ENCODE measurements at regions of chr17 and their contacts with region 1.

Region 1: GRCh38 chr17:38485146-38485468 is 56.8 kb downstream of the ARHGAP23 start:
- DNase-seq: no peak
- ATAC-seq: no peak
- H3K4me3 ChIP-seq: no peak overlapping the region
- H3K27ac ChIP-seq: no peak overlapping the region
- H3K4me1 ChIP-seq: peaks cover 0 to 4% of the 10 kb centered on the region in 2 experiments; a peak in 1 of 4 replicates
- H3K27me3 ChIP-seq: no peaks in the 10 kb centered on the region
- CTCF ChIP-seq: no peak
- POLR2A ChIP-seq: no peak
- RAD21 ChIP-seq: no peak

Region 2: GRCh38 chr17:38428112-38428642 is 56.9 kb before region 1 on chr17 and contains the start of gene ARHGAP23:
- CTCF ChIA-PET with region 1: interaction called, 8 read pairs
- POLR2A ChIA-PET with region 1: no interaction called
- RAD21 ChIA-PET with region 1: interaction called in 1 of 2 experiments, 4 read pairs
- intact Hi-C with region 1: loop called (anchors 1 kb)
- DNase-seq: no peak
- ATAC-seq: peak; percentile 66
- H3K4me3 ChIP-seq: peak within 1 kb of the TSS; percentile 64 to 81
- H3K27ac ChIP-seq: peak within 1 kb of the TSS; percentile 62
- H3K4me1 ChIP-seq: peaks cover 22 to 44% of the 10 kb centered on the region in 2 experiments
- H3K27me3 ChIP-seq: no peaks in the 10 kb centered on the region
- CTCF ChIP-seq: no peak
- POLR2A ChIP-seq: no peak
- RAD21 ChIP-seq: no peak
- total RNA-seq, gene ARHGAP23: 41.0 TPM

Region 3: DNA sequence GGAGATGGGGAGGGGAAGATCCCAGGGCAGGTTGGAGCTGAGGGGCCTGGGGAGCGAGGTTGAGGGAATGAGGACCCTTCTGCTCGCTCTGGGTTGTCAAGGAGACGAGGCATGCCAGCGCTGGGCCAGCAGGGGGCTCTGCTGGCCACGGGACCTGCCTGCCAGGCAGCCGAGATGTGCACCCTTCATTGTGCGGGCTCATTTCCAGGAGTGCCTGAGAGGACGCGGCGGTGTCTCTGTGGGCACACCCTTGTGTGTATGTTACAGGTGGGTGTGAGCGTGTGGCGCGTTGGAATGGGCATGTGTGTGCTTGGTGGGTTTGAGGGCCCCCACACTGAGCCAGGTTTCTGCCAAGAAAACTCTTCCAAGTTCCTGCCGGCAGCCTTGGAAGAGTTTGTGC is 41.0 kb before region 1 on chr17:
- CTCF ChIA-PET with region 1: no interaction called
- POLR2A ChIA-PET with region 1: no interaction called
- RAD21 ChIA-PET with region 1: interaction called in 1 of 2 experiments, 3 read pairs
- intact Hi-C with region 1: loop called (anchors 1 kb)
- DNase-seq: no peak
- ATAC-seq: peak; percentile 92
- H3K4me3 ChIP-seq: no peak overlapping the region
- H3K27ac ChIP-seq: no peak overlapping the region; the same call in 1 of the 2 replicates
- H3K4me1 ChIP-seq: peaks cover 36 to 50% of the 10 kb centered on the region in 2 experiments
- H3K27me3 ChIP-seq: no peaks in the 10 kb centered on the region
- CTCF ChIP-seq: peak; percentile 94 to 96 (median 94)
- POLR2A ChIP-seq: no peak
- RAD21 ChIP-seq: peak; percentile 98